IMR-90 (cell line): ENCODE measurements at regions of chr11 and their contacts with region 1.

Region 1: DNA sequence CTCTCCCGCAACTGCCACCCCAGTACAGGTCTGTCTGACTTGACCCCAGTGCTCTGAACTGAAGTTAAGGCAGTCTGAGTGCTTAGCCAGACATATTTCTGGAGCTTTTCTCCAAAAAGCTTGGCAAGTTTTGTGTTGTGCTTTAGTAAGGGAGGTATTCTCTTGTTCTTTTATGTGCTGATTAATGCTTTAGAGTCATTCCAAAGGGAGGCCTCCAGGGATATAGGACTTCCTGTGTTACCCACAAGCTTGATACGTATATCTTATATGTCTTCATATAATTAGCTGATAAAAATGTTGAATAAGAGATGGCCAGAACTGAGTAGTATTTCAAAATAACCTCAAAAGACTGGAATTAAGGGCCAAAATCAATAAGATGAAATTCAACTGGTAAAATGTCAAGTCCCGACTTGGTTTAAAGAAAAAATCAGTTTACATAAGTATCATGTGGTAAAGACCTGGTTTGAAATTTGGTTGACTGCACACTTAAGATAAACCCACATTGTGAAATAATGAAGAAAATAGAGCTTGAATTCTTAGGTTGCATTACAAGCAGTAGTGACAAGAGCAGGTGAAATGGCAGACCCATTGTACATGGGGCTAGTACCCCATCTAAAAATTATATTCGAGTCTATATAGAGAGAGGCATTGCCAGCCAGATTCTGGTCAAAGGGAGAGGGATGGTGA is 226.9 kb downstream of the SNX19 start:
- DNase-seq: no peak
- ATAC-seq: no peak
- H3K4me3 ChIP-seq: no peak overlapping the region
- H3K27ac ChIP-seq: no peak overlapping the region
- H3K4me1 ChIP-seq: no peaks in the 10 kb centered on the region; the same call in 1 of the 2 replicates
- H3K27me3 ChIP-seq: peaks cover 2% of the 10 kb centered on the region; the same call in 1 of the 2 replicates
- CTCF ChIP-seq: no peak
- POLR2A ChIP-seq: no peak
- RAD21 ChIP-seq: no peak

Region 2: GRCh38 chr11:130631119-130631518 is 58.2 kb before region 1 on chr11:
- CTCF ChIA-PET with region 1: interaction called, 10 read pairs
- POLR2A ChIA-PET with region 1: no interaction called
- dilution Hi-C with region 1: no loop called
- in situ Hi-C with region 1: no loop called
- intact Hi-C with region 1: no loop called
- DNase-seq: peak; percentile 95
- ATAC-seq: peak; percentile 76
- H3K4me3 ChIP-seq: no peak overlapping the region
- H3K27ac ChIP-seq: no peak overlapping the region
- H3K4me1 ChIP-seq: peaks cover 27% of the 10 kb centered on the region
- H3K27me3 ChIP-seq: no peaks in the 10 kb centered on the region
- CTCF ChIP-seq: no peak
- POLR2A ChIP-seq: no peak
- RAD21 ChIP-seq: 0 out of 2 replicates have a peak, but pooled peaks have one; percentile 11

Region 3: GRCh38 chr11:130706572-130706971 is 17.2 kb after region 1 on chr11:
- CTCF ChIA-PET with region 1: no interaction called
- POLR2A ChIA-PET with region 1: no interaction called
- dilution Hi-C with region 1: no loop called
- in situ Hi-C with region 1: no loop called
- intact Hi-C with region 1: no loop called
- DNase-seq: peak; percentile 40
- ATAC-seq: no peak
- H3K4me3 ChIP-seq: no peak overlapping the region
- H3K27ac ChIP-seq: no peak overlapping the region
- H3K4me1 ChIP-seq: peaks cover 22% of the 10 kb centered on the region
- H3K27me3 ChIP-seq: no peaks in the 10 kb centered on the region
- CTCF ChIP-seq: no peak
- POLR2A ChIP-seq: no peak
- RAD21 ChIP-seq: no peak

Region 4: GRCh38 chr11:131121426-131122333 is 432.3 kb after region 1 on chr11:
- CTCF ChIA-PET with region 1: no interaction called
- POLR2A ChIA-PET with region 1: no interaction called
- dilution Hi-C with region 1: no loop called
- in situ Hi-C with region 1: no loop called
- intact Hi-C with region 1: no loop called
- DNase-seq: no peak
- ATAC-seq: no peak
- H3K4me3 ChIP-seq: no peak overlapping the region
- H3K27ac ChIP-seq: no peak overlapping the region
- H3K4me1 ChIP-seq: no peaks in the 10 kb centered on the region
- H3K27me3 ChIP-seq: no peaks in the 10 kb centered on the region
- CTCF ChIP-seq: no peak
- POLR2A ChIP-seq: no peak
- RAD21 ChIP-seq: no peak